ENCODE measurements at regions of chr1 and their contacts with region 1.

Region 1: DNA sequence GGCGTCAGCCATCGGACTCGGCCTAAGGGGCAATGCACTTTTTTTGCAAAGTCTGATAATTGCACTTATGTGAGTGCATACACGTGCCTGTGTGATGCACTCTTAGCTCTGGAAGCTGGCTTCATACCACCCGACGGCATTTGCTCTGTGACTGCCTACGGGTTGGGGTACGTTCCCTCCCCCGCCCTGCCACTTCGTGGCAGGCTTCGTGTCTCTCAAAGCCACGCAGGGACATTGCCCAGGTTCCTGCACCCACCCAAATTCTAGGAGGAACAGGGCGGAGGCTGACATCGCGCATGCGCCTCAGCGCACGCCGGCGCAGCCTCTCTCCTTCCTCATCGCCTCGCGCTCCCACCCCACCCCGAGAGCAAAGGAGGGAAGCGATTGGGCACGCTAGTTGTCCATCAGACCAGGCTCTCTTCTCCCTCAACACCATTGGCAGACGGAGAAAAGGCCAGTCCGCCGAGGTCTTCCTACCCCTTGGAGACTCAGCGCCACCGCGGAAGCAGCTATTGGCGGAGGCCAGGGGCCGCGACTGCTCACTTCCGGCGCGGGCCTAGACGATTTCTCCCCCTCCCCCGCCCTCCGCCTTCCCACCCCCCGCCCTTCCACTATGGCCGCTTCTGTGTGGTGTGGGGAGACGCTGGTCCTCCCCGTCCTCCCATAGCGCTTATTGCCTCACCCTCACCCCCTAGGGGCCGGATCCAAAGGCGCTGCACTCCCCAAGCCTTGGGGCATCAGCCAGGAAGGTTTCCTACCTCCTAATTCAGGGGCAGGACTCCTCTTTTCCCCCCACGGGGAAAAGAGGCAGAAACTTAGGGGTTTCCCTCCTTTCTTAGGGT is at the start of gene INTS3:
- DNase-seq: peak; percentile 97 to 100 (median 99)
- ATAC-seq: peak; percentile 98
- H3K4me3 ChIP-seq: peak within 1 kb of the TSS; percentile 86 to 93
- H3K4me3 Mint-ChIP-seq: peak within 1 kb of the TSS; percentile 93
- H3K27ac ChIP-seq: peak within 1 kb of the TSS; percentile 91 to 96
- H3K27ac Mint-ChIP-seq: peak within 1 kb of the TSS; percentile 99
- H3K4me1 ChIP-seq: peaks cover 21% of the 10 kb centered on the region
- H3K4me1 Mint-ChIP-seq: peaks cover 34% of the 10 kb centered on the region
- H3K27me3 ChIP-seq: no peaks in the 10 kb centered on the region
- H3K27me3 Mint-ChIP-seq: no peaks in the 10 kb centered on the region
- CTCF ChIP-seq: no peak
- total RNA-seq, gene INTS3: 21.6 to 23.5 TPM

Region 2: GRCh38 chr1:153658400-153659174 is 69.1 kb before region 1 on chr1 and contains the start of gene SNAPIN:
- CTCF ChIA-PET with region 1: no interaction called
- POLR2A ChIA-PET with region 1: no interaction called
- intact Hi-C with region 1: loop called in 1 of 2 experiments (anchors 5 kb)
- DNase-seq: peak; percentile 75 to 93 (median 88)
- ATAC-seq: peak; percentile 96
- H3K4me3 ChIP-seq: peak within 1 kb of the TSS; percentile 83 to 85
- H3K4me3 Mint-ChIP-seq: peak within 1 kb of the TSS; percentile 96
- H3K27ac ChIP-seq: peak within 1 kb of the TSS; percentile 66 to 90
- H3K27ac Mint-ChIP-seq: peak within 1 kb of the TSS; percentile 92
- H3K4me1 ChIP-seq: peaks cover 12% of the 10 kb centered on the region
- H3K4me1 Mint-ChIP-seq: peaks cover 12% of the 10 kb centered on the region
- H3K27me3 ChIP-seq: no peaks in the 10 kb centered on the region
- H3K27me3 Mint-ChIP-seq: no peaks in the 10 kb centered on the region
- CTCF ChIP-seq: no peak
- total RNA-seq, gene SNAPIN: 6.1 to 6.5 TPM

Region 3: GRCh38 chr1:153783233-153784190 is 55.8 kb after region 1 on chr1:
- CTCF ChIA-PET with region 1: no interaction called
- POLR2A ChIA-PET with region 1: no interaction called
- intact Hi-C with region 1: loop called (anchors 2 kb)
- DNase-seq: peak; percentile 84 to 96 (median 91)
- ATAC-seq: peak; percentile 98
- H3K4me3 ChIP-seq: peak overlapping the region; percentile 91 to 93
- H3K4me3 Mint-ChIP-seq: peak overlapping the region; percentile 88
- H3K27ac ChIP-seq: peak overlapping the region; percentile 92 to 99
- H3K27ac Mint-ChIP-seq: peak overlapping the region; percentile 95
- H3K4me1 ChIP-seq: peaks cover 12% of the 10 kb centered on the region
- H3K4me1 Mint-ChIP-seq: peaks cover 10% of the 10 kb centered on the region
- H3K27me3 ChIP-seq: no peaks in the 10 kb centered on the region
- H3K27me3 Mint-ChIP-seq: no peaks in the 10 kb centered on the region
- CTCF ChIP-seq: no peak

Measured in CD8-positive, alpha-beta T cell (primary cell).